ENCODE measurements at regions of chr6 and their contacts with region 1.

Region 1: DNA sequence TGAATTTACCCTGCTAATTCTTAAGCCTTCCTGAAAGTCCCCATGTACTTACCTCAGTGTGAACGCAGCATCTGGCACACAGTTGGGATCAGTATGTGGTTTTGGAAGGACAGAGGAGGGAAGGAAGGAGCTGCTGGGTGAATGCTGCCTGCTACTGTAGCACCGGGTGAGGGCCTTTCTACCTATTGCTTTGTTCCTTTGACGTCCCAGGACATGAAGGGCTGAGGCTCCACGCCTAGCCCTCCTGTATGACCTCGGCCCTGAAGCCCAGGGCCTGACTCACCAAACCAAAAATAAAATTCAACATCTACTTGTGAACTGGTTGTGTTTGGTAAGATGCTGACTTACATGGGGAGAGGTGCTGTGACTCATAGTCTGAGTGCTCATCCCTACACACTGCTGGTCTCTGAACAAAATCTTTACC is 51.1 kb downstream of the ARID1B start:
- DNase-seq: peak; percentile 76 to 93
- ATAC-seq: peak; percentile 87 to 89
- H3K4me3 ChIP-seq: peak overlapping the region in 2 of 4 donors; percentile 17 to 21
- H3K27ac ChIP-seq: peak overlapping the region; percentile 89 to 95 (median 91)
- H3K4me1 ChIP-seq: peaks cover 80 to 83% of the 10 kb centered on the region in 2 donors
- H3K27me3 ChIP-seq: no peaks in the 10 kb centered on the region
- CTCF ChIP-seq: no peak
- POLR2A ChIP-seq: peak; percentile 54 to 75

Region 2: GRCh38 chr6:156846845-156847599 is 18.7 kb after region 1 on chr6:
- in situ Hi-C with region 1: no loop called
- intact Hi-C with region 1: loop called (anchors 2 kb)
- DNase-seq: no peak
- ATAC-seq: no peak
- H3K4me3 ChIP-seq: no peak overlapping the region
- H3K27ac ChIP-seq: peak overlapping the region; percentile 79 to 87 (median 84)
- H3K4me1 ChIP-seq: peaks cover 86 to 95% of the 10 kb centered on the region in 2 donors
- H3K27me3 ChIP-seq: no peaks in the 10 kb centered on the region
- CTCF ChIP-seq: no peak
- POLR2A ChIP-seq: no peak

Region 3: DNA sequence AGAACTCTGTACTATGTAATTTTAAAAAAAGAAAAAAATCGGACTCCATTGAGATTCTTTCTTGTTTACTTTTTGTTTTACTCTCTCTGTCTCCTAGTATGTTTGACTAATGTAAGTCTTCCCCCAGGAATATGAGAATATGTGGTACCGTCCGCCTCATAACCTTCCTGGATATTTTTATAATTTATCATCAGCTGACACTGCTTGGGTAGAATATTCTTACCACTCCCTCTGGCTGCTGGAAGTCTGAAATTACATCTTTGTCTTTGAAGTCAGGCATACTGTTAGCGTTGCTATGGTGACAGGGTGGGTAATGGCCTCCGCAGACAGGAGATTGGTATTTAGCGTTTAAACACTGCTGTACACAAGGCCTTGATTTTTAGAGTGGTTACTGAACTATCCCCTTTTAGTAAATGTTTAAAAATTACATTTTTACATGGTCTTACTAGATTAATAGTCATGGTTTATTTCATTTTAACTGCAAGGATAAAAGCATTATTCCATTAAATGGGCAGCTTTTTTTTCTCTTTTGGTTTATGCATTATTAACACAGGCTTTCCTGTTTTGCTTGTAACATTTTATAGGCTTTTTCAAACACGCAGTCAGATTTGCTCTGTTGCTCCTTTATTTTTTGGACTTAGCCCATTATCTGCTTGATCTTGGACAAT is 125.3 kb after region 1 on chr6:
- in situ Hi-C with region 1: no loop called
- intact Hi-C with region 1: loop called (anchors 5 kb)
- DNase-seq: peak; percentile 62 to 76
- ATAC-seq: peak; percentile 81 to 84
- H3K4me3 ChIP-seq: peak overlapping the region in 3 of 4 donors; percentile 1 to 19 (median 7)
- H3K27ac ChIP-seq: peak overlapping the region; percentile 81 to 92 (median 88)
- H3K4me1 ChIP-seq: peaks cover 90 to 92% of the 10 kb centered on the region in 2 donors
- H3K27me3 ChIP-seq: no peaks in the 10 kb centered on the region
- CTCF ChIP-seq: peak in 4 of 5 experiments; percentile 17 to 42 (median 30)
- POLR2A ChIP-seq: peak in 1 of 2 donors; percentile 75

Region 4: GRCh38 chr6:157379656-157380454 is 551.6 kb after region 1 on chr6:
- in situ Hi-C with region 1: no loop called
- intact Hi-C with region 1: no loop called
- DNase-seq: peak; percentile 86
- ATAC-seq: peak; percentile 78
- H3K4me3 ChIP-seq: peak overlapping the region; percentile 90 to 99 (median 94)
- H3K27ac ChIP-seq: peak overlapping the region; percentile 97 to 98 (median 98)
- H3K4me1 ChIP-seq: peaks cover 14 to 16% of the 10 kb centered on the region in 2 donors
- H3K27me3 ChIP-seq: no peaks in the 10 kb centered on the region
- CTCF ChIP-seq: no peak
- POLR2A ChIP-seq: peak; percentile 5 to 16